Common myeloid progenitor, CD34-positive (primary cell): ENCODE measurements at regions of chr1 and their contacts with region 1.

Region 1: DNA sequence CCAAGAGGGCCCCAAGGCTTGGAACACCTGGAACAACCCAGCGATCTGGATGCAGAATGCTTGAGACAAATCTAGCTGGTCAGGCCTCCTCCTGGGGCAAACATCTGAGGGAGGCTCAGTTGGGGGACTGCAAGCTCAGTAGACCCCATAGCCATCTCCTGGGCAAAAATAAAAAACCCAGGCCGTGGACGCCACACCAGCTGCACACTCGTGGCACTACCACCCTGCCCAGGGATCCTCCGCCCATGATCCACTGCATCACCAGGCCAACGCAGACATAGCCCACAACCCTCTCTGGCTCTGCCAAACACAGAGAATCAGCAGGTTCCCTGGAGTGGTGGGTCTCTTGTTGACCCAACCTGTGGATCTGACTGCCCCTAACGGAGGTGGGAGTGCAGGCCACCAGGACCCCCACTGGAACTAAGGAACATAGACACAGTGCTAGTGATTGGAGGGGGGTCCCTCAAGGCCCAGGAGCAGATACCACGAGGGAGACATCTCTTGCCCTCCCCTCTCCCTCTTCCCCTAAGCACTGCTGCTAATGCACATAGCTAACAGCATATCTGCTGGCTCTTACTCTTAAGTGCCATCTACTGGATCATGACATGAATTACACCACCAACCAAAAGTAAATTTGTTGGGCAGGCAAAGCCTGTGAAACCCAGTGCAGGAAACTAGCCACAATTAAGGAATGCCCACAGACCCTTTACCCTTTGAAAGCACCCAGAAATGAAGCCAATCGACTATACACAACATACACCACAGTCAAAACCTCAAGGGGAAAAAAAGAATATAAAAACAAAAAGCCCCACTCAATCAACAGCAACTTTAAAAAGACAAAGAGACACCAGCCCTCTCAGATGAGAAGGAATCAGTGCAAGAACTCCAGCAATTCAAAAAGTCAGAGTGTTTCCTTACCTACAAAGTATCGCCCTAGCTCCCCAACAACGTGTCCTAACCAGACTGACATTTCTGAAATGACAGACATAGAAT is 147.3 kb downstream of the CHD1L start:
- DNase-seq: peak; percentile 36 to 58 (median 51)
- H3K4me3 ChIP-seq: no peak overlapping the region
- H3K27ac ChIP-seq: no peak overlapping the region
- H3K4me1 ChIP-seq: no peaks in the 10 kb centered on the region
- H3K27me3 ChIP-seq: no peaks in the 10 kb centered on the region

Region 2: DNA sequence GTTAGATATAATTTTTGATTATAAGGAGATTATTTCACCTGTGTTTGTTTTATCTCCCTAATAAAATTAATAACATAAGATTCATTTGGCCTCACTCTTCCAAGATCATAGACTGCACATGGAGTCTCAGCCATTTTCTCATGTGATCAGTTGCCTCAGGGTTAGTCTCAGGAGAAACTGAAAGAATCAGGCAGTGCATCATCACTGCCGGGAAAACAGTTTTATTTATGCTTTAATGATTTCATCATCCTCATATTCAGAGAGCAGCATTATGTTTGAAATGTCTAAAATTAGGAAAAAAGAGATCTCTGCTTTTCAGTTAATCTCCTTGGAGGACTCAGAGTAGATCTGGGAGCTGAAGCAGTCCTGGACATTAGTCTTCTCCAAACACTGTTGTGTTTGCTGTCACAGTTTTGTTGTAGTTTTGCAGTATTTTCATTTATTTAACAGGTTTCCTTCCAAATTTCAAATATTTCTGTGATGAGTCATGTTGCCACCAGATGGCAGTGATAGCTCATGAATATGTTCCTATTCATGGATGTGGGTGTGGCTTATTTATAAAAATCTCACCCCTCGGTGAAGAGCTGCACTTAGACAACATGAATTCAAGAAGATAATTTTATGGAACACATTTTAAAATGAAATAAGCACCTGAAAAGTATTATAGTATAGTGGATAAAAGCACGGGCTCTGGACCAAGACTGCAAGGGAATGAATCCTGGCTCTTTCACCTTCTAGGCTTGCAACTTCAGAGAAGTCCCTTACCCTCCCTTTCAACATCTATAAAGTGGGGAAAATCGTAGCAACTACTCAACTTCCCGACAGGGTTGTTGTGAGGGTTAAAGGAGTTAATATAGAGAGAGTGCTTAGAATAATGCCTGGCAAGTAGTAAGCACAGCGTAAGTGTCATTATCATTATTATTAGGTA is 116.2 kb before region 1 on chr1:
- CTCF ChIA-PET with region 1: interaction called, 36 read pairs
- POLR2A ChIA-PET with region 1: no interaction called
- DNase-seq: peak; percentile 63 to 86 (median 81)
- H3K4me3 ChIP-seq: no peak overlapping the region
- H3K27ac ChIP-seq: no peak overlapping the region
- H3K4me1 ChIP-seq: no peaks in the 10 kb centered on the region
- H3K27me3 ChIP-seq: no peaks in the 10 kb centered on the region

Region 3: GRCh38 chr1:147377263-147378246 is 12.3 kb before region 1 on chr1:
- CTCF ChIA-PET with region 1: interaction called, 20 read pairs
- POLR2A ChIA-PET with region 1: no interaction called
- DNase-seq: peak; percentile 58 to 83 (median 72)
- H3K4me3 ChIP-seq: no peak overlapping the region
- H3K27ac ChIP-seq: peak overlapping the region; percentile 1 to 78
- H3K4me1 ChIP-seq: no peaks in the 10 kb centered on the region
- H3K27me3 ChIP-seq: no peaks in the 10 kb centered on the region